BJ (cell line): ENCODE measurements at regions of chr12 and their contacts with region 1.

Region 1: DNA sequence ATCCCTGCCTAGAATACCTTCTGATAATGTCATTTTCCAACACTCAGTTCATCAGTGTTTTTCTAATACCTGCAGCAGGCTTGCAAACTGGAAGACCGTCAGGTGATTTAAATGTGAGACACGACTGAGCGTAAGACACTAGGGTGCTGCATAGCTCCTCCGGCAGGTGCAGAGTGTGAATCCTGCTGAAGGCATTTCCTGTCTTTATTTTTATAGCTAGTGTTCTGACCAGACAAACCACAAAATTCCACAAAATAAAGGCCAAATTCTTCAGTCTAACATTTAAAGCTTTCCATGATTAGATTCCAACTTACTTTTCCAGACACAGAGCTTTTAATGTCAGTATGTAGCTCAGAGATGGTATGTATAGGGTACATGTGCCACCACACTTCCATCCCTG is 70.7 kb downstream of the BBS10 start:
- DNase-seq: peak; percentile 51
- H3K4me3 ChIP-seq: no peak overlapping the region
- H3K27me3 ChIP-seq: no peaks in the 10 kb centered on the region
- CTCF ChIP-seq: no peak

Region 2: DNA sequence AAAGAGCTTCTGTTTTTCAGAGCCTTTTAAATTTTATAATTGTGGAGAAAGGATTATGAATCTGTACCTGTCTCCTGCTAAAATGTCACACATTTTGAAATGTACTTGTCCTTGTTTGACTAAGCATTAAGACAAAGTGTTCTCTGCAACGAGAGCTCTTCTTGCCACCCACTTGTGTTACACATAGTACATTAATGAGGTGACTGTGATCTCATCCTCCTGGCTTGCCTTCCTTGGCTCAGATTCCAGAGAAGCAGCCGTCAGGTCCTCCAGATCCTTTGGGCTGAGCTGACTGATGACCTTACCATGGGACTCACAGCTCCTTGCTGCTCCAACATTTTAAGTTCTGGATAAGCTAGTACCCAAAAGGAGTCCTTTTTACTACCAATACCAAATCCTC is 10.7 kb before region 1 on chr12:
- CTCF ChIA-PET with region 1: interaction called, 16 read pairs
- POLR2A ChIA-PET with region 1: no interaction called
- DNase-seq: peak; percentile 57
- H3K4me3 ChIP-seq: no peak overlapping the region
- H3K27me3 ChIP-seq: no peaks in the 10 kb centered on the region
- CTCF ChIP-seq: no peak

Region 3: GRCh38 chr12:76569685-76570604 is 292.5 kb after region 1 on chr12:
- CTCF ChIA-PET with region 1: no interaction called
- POLR2A ChIA-PET with region 1: no interaction called
- DNase-seq: no peak
- H3K4me3 ChIP-seq: no peak overlapping the region
- H3K27me3 ChIP-seq: no peaks in the 10 kb centered on the region
- CTCF ChIP-seq: no peak